ENCODE measurements at regions of chr1 and their contacts with region 1.

Region 1: DNA sequence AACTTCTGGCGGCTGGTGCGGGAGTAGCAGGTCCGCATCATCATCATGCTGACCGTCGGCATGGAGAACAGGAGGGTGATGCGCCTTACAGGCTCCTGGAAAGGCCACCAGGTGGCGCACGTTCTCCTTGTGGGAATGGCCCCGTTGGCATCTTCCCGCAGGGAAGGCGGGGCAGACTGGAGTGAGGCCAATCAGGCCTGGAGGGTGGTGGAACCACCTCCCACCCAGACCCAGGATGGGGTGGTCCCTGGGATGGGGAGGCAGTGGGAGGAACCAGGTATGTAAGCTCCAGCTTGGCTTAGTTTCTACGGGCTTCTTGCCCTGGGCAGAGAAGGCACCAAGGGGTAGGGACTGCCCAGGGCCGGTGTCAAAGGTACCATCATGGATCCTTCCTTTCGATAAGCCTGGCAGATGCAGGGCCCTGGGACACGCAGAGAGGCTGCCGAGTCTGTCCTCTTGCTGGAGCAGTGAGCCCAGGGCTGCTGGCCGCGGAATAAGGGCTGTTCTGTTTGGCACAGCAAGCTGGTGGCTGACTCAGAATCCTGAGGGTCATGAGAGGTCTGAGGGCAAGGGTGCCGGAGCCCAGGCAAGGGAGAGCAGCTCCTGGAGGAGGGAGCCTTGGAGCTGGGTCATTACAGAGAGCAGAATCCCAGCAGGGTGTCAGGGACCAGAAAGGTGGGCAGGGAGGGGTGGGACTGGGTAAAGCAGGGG is 8.7 kb upstream of the LGR6 start:
- DNase-seq: peak; percentile 91 to 92
- ATAC-seq: peak; percentile 74 to 91
- H3K4me3 ChIP-seq: no peak overlapping the region
- H3K27ac ChIP-seq: peak overlapping the region in 1 of 2 experiments; percentile 42; a peak in 1 of 6 replicates
- H3K4me1 ChIP-seq: peaks cover 11% of the 10 kb centered on the region
- CTCF ChIP-seq: peak; percentile 91
- EP300 ChIP-seq: no peak
- POLR2A ChIP-seq: no peak
- RAD21 ChIP-seq: peak; percentile 78 to 84

Region 2: DNA sequence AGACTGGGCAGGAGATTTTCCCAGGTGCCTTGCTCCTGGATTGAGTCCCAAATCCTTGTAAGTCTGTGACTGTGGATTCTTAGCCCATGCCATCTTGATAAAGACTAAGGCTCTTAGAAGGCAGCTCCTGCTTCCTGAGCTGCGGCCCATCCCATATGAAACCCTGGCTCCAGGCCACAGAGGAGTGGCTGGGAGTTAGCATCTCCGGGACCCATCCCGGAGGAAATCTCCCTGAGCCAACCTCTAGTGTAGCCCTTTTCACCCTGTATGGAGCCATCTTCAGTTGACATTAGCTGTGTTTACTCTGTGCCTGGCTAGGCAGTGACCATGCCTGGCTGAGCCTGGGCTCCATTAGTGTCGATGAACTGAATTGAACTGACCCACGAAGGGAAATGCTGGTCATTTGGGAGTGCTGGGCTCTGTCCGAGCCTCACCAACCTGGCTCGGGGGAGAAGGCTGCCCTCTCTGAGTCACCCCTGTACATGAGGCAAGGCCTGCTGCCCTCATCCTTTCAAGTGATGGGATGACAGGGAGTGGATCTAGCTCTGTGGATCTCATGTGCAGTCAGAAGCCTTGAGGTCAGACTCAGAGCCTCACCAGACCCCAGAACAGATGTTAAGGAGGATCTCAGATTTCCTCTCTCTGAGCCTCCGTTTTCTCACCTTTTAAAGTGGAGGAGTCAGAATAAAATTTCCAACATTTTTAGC is 46.2 kb after region 1 on chr1:
- CTCF ChIA-PET with region 1: interaction called, 32 read pairs
- POLR2A ChIA-PET with region 1: no interaction called
- DNase-seq: no peak
- ATAC-seq: no peak
- H3K4me3 ChIP-seq: no peak overlapping the region
- H3K27ac ChIP-seq: peak overlapping the region in 1 of 2 experiments; percentile 3; a peak in 2 of 6 replicates
- H3K4me1 ChIP-seq: peaks cover 12% of the 10 kb centered on the region
- CTCF ChIP-seq: no peak
- EP300 ChIP-seq: no peak
- POLR2A ChIP-seq: no peak
- RAD21 ChIP-seq: no peak

Region 3: DNA sequence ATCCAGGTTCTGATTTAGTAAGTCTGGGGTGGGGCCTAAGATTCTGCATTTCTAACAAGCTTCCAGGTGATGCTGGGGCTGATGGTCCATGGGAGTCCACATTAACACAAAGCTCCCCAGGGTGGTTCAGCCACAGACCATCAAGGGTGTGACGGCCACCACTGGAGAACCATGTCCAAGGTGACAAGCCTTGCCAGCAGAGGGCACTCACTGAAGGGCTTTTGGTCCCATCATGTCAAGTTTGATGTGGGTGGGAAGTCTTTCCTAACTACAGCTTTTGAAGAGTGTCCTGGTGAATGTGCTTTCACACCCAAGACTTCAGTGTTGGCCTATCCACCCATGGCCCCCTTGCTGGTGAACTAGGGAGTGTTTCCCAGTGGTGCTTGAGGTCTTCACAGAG is 89.7 kb after region 1 on chr1:
- CTCF ChIA-PET with region 1: interaction called, 17 read pairs
- POLR2A ChIA-PET with region 1: no interaction called
- DNase-seq: peak; percentile 50 to 54
- ATAC-seq: peak in 1 of 2 experiments; percentile 87; a peak in 3 of 6 replicates
- H3K4me3 ChIP-seq: no peak overlapping the region
- H3K27ac ChIP-seq: no peak overlapping the region
- H3K4me1 ChIP-seq: no peaks in the 10 kb centered on the region
- CTCF ChIP-seq: peak; percentile 57
- EP300 ChIP-seq: no peak
- POLR2A ChIP-seq: no peak
- RAD21 ChIP-seq: peak; percentile 58 to 78

Region 4: DNA sequence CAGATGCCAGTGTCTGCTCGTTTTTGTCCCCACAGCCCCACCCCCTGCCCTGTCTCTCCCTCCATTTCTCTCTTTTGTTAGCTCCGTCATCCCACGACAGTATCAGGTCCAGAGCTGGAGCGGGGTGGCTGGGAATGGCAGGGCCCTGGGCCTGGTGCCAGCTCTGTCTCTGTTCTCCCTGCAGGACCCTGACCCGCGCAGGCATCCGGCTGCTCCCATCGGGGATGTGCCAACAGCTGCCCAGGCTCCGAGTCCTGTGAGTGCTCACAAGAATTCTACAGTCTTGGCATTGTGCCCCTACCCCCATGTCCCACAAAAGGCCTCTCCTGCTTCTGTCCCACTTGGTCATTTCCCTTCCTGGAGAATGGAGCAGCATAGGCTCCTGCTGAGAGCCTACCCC is 119.5 kb after region 1 on chr1:
- CTCF ChIA-PET with region 1: interaction called, 39 read pairs
- POLR2A ChIA-PET with region 1: no interaction called
- DNase-seq: no peak
- ATAC-seq: no peak
- H3K4me3 ChIP-seq: no peak overlapping the region
- H3K27ac ChIP-seq: no peak overlapping the region
- H3K4me1 ChIP-seq: no peaks in the 10 kb centered on the region
- CTCF ChIP-seq: no peak
- EP300 ChIP-seq: no peak
- POLR2A ChIP-seq: no peak
- RAD21 ChIP-seq: no peak

Region 5: GRCh38 chr1:202329891-202330290 is 145.0 kb after region 1 on chr1:
- CTCF ChIA-PET with region 1: interaction called, 350 read pairs
- POLR2A ChIA-PET with region 1: no interaction called
- DNase-seq: peak in 1 of 2 experiments; percentile 33
- ATAC-seq: peak; percentile 39 to 63; a peak in 4 of 6 replicates
- H3K4me3 ChIP-seq: no peak overlapping the region
- H3K27ac ChIP-seq: no peak overlapping the region
- H3K4me1 ChIP-seq: no peaks in the 10 kb centered on the region
- CTCF ChIP-seq: peak; percentile 24; the same call in 1 of the 3 replicates
- EP300 ChIP-seq: no peak
- POLR2A ChIP-seq: no peak
- RAD21 ChIP-seq: no peak; a peak in 1 of 5 replicates

Measured in A549 (cell line).